ENCODE measurements at regions of chr1 and their contacts with region 1.

Region 1: DNA sequence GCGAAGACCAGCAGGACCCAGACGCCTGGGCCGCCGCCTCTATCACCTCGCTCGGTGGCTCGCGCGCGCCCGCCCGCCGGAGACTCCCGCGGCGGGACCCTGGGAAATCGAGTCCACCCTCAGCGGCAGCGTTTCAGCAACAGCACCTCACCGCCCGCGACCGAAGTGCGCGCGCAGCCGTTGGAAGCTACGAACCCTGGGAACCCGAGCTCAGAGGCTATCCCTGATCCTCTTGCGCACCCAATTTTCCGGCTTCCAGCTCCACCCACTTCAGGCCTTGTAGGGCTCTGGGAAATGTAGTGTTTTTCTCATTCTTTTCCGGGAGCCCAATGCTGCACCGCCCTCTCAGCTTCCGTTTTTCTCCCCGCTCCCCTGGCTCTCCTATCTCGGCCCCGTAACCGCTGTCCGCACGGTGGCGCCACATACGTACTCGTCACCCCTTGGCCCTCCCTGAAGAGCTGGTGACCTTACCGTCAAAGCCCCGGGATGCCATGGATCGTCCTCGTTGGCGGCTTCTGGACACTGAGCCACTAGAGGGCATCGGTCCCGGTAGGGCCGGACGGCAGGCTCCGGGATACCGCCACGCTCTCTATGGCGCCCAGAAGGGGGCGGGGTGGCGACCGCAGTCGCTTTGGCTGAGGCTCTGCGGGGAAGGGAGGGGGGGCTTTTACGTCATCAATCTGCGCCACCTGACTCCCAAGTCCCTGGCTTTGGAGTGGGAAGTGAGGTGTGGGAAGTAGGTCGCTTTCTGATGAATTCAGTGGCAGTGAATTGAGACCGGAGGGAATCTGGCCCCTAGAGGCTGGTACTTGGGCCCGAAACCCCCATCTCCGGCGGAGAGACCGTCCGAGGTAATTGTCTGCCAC is at the starts of genes ODR4 and TPR:
- DNase-seq: peak; percentile 96
- ATAC-seq: peak; percentile 93
- H3K4me3 Mint-ChIP-seq: peak within 1 kb of the TSS; percentile 97
- H3K27ac Mint-ChIP-seq: peak within 1 kb of the TSS; percentile 100
- H3K4me1 Mint-ChIP-seq: no peaks in the 10 kb centered on the region; the same call in 1 of the 2 replicates
- H3K27me3 Mint-ChIP-seq: no peaks in the 10 kb centered on the region; the same call in 1 of the 2 replicates
- CTCF ChIP-seq: peak; percentile 68
- total RNA-seq, gene ODR4: 14.1 to 14.5 TPM (median 14.3 TPM) in 3 replicates
- total RNA-seq, gene TPR: 110 to 120 TPM (median 119 TPM) in 3 replicates

Region 2: GRCh38 chr1:186325239-186325638 is 50.1 kb before region 1 on chr1:
- CTCF ChIA-PET with region 1: interaction called, 31 read pairs
- POLR2A ChIA-PET with region 1: no interaction called
- DNase-seq: no peak
- ATAC-seq: peak; percentile 65
- H3K4me3 Mint-ChIP-seq: no peak overlapping the region
- H3K27ac Mint-ChIP-seq: no peak overlapping the region
- H3K4me1 Mint-ChIP-seq: no peaks in the 10 kb centered on the region
- H3K27me3 Mint-ChIP-seq: no peaks in the 10 kb centered on the region
- CTCF ChIP-seq: no peak; the same call in 1 of the 2 replicates

Region 3: GRCh38 chr1:186330758-186331157 is 44.6 kb before region 1 on chr1:
- CTCF ChIA-PET with region 1: interaction called, 31 read pairs
- POLR2A ChIA-PET with region 1: no interaction called
- DNase-seq: no peak
- ATAC-seq: peak; percentile 59; the same call in 1 of the 2 replicates
- H3K4me3 Mint-ChIP-seq: no peak overlapping the region
- H3K27ac Mint-ChIP-seq: no peak overlapping the region
- H3K4me1 Mint-ChIP-seq: no peaks in the 10 kb centered on the region
- H3K27me3 Mint-ChIP-seq: no peaks in the 10 kb centered on the region
- CTCF ChIP-seq: peak; percentile 39; the same call in 1 of the 2 replicates

Region 4: GRCh38 chr1:186386725-186387383 is 11.5 kb after region 1 on chr1:
- CTCF ChIA-PET with region 1: interaction called, 14 read pairs
- POLR2A ChIA-PET with region 1: interaction called, 8 read pairs
- DNase-seq: no peak
- ATAC-seq: no peak
- H3K4me3 Mint-ChIP-seq: no peak overlapping the region
- H3K27ac Mint-ChIP-seq: no peak overlapping the region
- H3K4me1 Mint-ChIP-seq: no peaks in the 10 kb centered on the region
- H3K27me3 Mint-ChIP-seq: no peaks in the 10 kb centered on the region
- CTCF ChIP-seq: no peak

Measured in WTC11 (cell line).